ENCODE measurements at regions of chr3 and their contacts with region 1.

Region 1: DNA sequence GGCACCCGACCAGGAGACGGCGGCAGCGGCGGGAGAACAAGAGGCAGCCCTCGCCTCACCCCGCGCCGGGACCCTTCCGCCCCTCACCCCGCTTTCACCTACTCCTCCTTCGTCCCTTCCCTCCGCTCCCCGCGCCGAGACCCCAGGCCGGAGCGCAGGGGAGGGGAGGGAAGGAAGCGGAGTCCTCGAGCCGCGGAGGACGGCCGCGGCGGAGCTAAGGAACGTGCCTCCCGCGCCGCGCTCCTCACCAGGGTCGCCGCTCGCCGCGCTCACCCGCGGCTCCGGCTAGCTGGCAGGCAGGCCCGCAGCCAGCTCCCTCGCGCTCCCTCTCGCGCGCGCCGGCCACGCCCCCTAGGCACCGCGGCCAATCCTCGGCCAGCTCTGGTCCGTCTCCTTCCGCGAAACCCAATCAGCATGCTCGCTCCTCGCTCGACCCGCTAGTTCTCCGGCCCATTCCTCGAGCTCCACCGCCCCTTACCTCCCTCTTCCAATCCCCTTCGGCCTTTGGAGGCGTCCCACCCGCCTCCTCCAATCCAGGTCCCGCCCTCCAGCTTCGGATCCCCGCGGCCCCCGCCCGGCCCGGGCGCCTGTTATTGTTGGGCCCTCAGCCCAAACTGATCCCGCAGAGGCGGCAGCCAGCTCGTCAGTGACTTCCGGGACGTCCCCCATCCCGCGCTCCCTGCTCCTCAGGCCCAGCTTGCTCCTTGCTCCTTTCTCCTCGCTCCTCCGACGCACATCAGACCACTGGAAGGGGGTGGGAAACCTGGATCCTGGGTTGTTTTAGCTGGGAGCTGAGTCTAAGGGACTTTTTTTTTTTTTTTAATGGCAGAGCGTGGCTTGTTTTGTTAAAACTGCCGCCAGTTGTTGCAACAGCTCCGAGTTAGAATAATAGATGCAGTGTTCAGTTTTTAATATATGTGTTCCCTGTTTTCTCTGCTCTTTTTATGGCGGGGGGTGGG is at the start of gene DCBLD2:
- DNase-seq: peak; percentile 95
- H3K4me3 Mint-ChIP-seq: peak within 1 kb of the TSS; percentile 83
- H3K27ac Mint-ChIP-seq: peak within 1 kb of the TSS; percentile 28
- H3K4me1 Mint-ChIP-seq: peaks cover 12% of the 10 kb centered on the region
- H3K27me3 Mint-ChIP-seq: peaks cover 2% of the 10 kb centered on the region
- total RNA-seq, gene DCBLD2: 1.3 to 2.1 TPM

Region 2: GRCh38 chr3:98972155-98972554 is 70.5 kb after region 1 on chr3:
- CTCF ChIA-PET with region 1: no interaction called
- intact Hi-C with region 1: loop called (anchors 1 kb)
- DNase-seq: no peak
- H3K4me3 Mint-ChIP-seq: no peak overlapping the region
- H3K27ac Mint-ChIP-seq: no peak overlapping the region
- H3K4me1 Mint-ChIP-seq: peaks cover 6% of the 10 kb centered on the region
- H3K27me3 Mint-ChIP-seq: peaks cover 7% of the 10 kb centered on the region

Region 3: DNA sequence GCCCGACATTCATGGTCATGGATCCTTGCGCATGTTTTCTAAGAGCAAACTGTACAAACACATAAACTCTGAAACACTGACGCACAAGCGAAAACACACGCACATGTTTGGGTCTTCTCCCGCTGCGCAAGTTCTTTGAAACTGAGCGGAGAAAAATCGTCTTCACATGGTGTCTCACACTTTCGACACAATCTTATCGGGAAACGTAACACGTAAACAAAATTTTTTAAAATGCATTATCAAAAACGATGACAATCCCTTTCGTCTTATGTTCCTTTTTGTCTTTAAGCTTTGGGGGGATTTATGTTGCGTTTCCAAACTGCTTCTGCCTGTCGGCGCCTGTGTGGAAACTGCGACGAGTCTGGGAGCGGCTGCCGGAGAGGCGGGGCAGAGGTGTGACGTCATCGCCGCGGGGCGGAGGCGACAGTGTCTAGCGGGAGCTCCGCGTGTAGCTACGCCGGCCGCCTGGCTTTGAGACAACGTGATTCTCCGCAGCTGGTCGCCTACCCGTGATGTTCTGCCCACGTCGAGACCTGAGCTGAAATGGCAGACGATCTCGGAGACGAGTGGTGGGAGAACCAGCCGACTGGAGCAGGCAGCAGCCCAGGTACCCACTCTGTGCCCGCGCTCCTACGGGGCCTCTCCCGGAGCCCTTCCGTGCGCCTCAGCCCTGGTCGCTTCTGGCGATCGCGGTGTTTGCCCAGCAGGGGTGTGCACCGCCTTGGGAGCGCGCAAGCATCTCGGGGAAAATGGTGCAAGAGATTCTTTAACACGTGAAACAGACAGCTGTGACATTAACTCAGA is 916.0 kb after region 1 on chr3 and contains the start of gene CMSS1:
- CTCF ChIA-PET with region 1: no interaction called
- intact Hi-C with region 1: loop called (anchors 2 kb)
- DNase-seq: peak; percentile 95
- H3K4me3 Mint-ChIP-seq: peak within 1 kb of the TSS; percentile 98
- H3K27ac Mint-ChIP-seq: peak within 1 kb of the TSS; percentile 98
- H3K4me1 Mint-ChIP-seq: peaks cover 39% of the 10 kb centered on the region
- H3K27me3 Mint-ChIP-seq: no peaks in the 10 kb centered on the region
- total RNA-seq, gene CMSS1: 95.8 to 106 TPM

Region 4: DNA sequence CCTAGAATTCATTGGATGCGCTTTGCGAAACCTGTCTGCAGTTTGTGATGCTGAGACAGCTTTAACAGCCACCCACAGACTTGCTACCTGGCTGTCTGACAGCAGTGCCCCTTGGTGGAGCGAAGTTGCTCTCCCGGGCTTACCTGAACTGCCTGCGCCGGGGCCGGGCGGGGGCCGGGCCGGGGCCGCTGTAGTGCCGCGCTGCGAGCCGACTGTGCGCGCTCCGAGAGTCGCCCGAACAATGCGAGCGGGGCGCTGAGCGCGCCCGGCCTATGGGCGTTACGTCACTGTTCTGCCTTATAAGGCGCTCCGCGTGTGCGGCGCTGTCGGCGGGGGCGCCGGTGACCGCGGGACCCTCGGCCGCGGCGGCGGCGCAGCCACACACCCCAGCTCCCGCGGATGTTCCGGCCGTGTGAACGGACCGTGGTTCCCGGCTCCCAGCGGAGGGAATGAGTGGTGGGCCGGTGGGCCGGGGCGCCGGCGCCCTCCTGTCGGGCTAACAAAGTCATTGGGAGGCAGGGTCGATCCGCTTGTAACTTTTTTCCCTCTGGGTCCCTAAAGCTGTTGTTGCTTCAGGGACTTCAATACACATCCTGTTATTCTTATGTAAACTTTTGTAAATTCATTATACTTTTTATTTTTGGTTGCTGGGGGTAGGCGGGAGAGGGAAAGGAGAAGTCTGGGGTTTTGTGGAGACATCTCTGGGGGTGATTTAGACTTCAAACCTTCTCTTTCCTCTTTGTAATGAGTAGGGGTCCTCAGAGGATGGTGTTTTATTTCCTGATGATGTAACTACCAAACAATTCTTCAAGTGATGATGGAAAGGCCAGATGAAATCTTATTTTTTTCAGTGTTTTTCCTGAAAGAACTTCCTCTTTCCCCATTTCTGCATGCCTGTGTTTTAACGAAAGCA is 974.5 kb after region 1 on chr3:
- CTCF ChIA-PET with region 1: no interaction called
- intact Hi-C with region 1: loop called (anchors 10 kb)
- DNase-seq: peak; percentile 67
- H3K4me3 Mint-ChIP-seq: peak overlapping the region; percentile 65
- H3K27ac Mint-ChIP-seq: no peak overlapping the region
- H3K4me1 Mint-ChIP-seq: peaks cover 13% of the 10 kb centered on the region
- H3K27me3 Mint-ChIP-seq: no peaks in the 10 kb centered on the region

Measured in activated naive CD4-positive, alpha-beta T cell treated with anti-CD3 and anti-CD28 coated beads for 36 hours (primary cell).